A673 (cell line): ENCODE measurements at regions of chr3 and their contacts with region 1.

Region 1: DNA sequence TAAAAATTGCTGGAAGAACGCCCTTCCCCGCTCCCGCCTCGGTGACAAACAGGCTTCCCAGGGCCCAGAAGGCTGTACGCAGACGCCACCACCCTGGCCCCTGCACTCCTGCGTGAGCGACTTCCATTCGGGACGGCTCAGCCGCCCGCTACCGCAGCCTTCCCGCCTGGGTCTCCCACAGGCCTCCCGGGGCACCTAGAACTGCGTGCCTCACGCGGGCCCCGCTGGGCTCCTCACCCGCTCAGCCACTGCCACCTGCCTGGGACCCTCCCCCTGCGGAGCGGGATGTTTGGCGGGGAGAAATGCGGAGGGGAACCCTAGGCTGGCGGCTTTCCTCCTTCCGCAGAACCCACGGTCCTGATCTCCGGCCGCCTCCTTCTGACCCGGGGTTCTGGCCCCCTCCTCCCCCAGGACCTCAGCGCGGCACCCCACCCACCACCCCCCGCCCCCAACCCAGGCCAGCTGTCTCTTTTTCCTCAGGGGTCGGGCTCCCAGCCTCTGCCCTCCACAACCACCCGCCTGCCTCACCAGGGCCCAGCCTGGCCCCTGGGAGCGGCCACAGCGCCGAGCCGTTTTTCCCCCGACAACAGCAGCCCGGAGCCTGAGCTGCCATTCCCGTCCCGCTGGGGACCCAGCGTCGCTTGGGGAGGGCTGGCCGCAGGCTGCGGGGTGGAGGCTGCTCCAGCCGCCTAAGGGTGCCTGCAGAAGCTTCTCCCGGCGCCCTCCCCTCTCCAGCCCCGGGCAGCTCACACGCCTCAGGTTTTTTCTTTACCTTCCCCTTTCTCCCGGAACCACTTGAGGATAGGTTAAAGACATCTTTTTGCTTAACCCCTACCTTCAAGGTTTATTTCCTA is 27.5 kb upstream of the RAB7A start:
- DNase-seq: peak; percentile 50
- H3K4me3 ChIP-seq: peak overlapping the region; percentile 48
- H3K27ac ChIP-seq: no peak overlapping the region
- H3K4me1 ChIP-seq: no peaks in the 10 kb centered on the region
- H3K27me3 ChIP-seq: no peaks in the 10 kb centered on the region
- CTCF ChIP-seq: no peak

Region 2: GRCh38 chr3:128665362-128666038 is 32.9 kb before region 1 on chr3:
- CTCF ChIA-PET with region 1: no interaction called
- POLR2A ChIA-PET with region 1: no interaction called
- intact Hi-C with region 1: loop called (anchors 1 kb)
- DNase-seq: no peak
- H3K4me3 ChIP-seq: no peak overlapping the region
- H3K27ac ChIP-seq: no peak overlapping the region
- H3K4me1 ChIP-seq: no peaks in the 10 kb centered on the region
- H3K27me3 ChIP-seq: no peaks in the 10 kb centered on the region
- CTCF ChIP-seq: peak; percentile 28; the same call in 1 of the 2 replicates

Region 3: GRCh38 chr3:129000742-129001100 is 302.3 kb after region 1 on chr3:
- CTCF ChIA-PET with region 1: no interaction called
- POLR2A ChIA-PET with region 1: interaction called, 10 read pairs
- intact Hi-C with region 1: no loop called
- DNase-seq: no peak
- H3K4me3 ChIP-seq: no peak overlapping the region
- H3K27ac ChIP-seq: no peak overlapping the region
- H3K4me1 ChIP-seq: peaks cover 23% of the 10 kb centered on the region
- H3K27me3 ChIP-seq: peaks cover 41% of the 10 kb centered on the region
- CTCF ChIP-seq: no peak